ENCODE measurements at regions of chr5 and their contacts with region 1.

Region 1: DNA sequence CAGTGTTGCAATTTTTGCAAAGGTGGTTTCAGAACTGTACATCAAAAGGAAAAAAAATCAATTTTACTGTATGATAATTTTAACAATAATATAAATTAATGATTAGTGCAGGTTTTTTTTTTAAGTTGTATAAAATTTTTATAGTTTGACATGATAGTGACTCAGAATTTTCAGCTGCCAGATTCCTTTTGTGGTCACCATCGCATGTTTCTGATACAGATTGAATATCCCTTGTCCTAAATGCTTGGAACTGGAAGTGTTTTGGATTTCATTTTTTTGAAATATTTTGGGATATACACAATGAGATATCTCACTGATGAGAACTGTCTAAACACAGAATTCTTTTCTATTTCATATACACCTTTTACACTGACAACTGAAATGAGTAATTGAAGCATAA is 361.3 kb downstream of the RAB3C start:
- DNase-seq: no peak
- ATAC-seq: no peak
- H3K4me3 ChIP-seq: no peak overlapping the region
- H3K27ac ChIP-seq: no peak overlapping the region
- H3K4me1 ChIP-seq: no peaks in the 10 kb centered on the region
- H3K27me3 ChIP-seq: no peaks in the 10 kb centered on the region
- CTCF ChIP-seq: no peak
- EP300 ChIP-seq: no peak
- POLR2A ChIP-seq: no peak
- RAD21 ChIP-seq: no peak

Region 2: DNA sequence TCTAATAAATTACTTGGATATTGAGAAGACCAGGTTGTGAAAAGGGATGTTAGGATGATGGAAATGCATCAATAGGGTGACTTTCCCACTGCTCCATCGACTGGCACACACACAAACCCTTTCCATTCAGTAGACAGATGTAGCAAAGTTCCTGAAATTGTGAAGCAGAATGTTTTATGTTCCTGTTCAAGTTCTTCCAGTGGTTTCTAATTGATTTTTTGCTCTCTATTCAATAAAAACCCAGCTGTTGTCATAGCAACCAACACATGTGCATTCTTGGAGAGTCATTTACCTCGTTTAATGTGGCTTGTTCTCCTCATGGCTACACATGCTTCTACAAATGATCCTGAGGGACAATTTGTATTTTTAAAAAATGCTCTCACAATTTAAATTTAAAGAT is 116.8 kb before region 1 on chr5:
- CTCF ChIA-PET with region 1: no interaction called
- POLR2A ChIA-PET with region 1: no interaction called
- RAD21 ChIA-PET with region 1: no interaction called
- SMC1A ChIA-PET with region 1: no interaction called
- in situ Hi-C with region 1: no loop called
- intact Hi-C with region 1: no loop called
- DNase-seq: no peak
- ATAC-seq: no peak
- H3K4me3 ChIP-seq: no peak overlapping the region
- H3K27ac ChIP-seq: no peak overlapping the region
- H3K4me1 ChIP-seq: no peaks in the 10 kb centered on the region
- H3K27me3 ChIP-seq: no peaks in the 10 kb centered on the region
- CTCF ChIP-seq: no peak
- EP300 ChIP-seq: no peak
- POLR2A ChIP-seq: no peak
- RAD21 ChIP-seq: no peak

Region 3: DNA sequence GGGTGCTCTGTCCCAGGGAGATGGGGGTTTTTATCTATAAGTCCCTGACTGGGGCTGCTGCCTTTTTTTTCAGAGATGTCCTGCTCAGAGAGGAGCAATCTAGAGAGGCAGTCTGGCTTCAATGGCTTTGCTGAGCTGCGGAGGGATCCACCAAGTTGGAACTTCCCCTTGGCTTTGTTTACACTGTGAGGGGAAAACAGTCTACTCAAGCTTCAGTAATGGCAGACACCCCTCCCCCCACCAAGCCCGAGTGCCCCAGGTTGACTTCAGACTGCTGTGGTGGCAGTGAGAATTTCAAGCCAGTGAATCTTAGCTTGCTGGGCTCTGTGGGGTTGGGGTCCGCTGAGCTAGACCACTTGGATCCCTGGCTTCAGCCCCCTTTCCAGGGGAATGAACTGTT is 14.5 kb after region 1 on chr5:
- CTCF ChIA-PET with region 1: interaction called, 10 read pairs
- POLR2A ChIA-PET with region 1: interaction called, 4 read pairs
- RAD21 ChIA-PET with region 1: no interaction called
- SMC1A ChIA-PET with region 1: interaction called, 4 read pairs
- in situ Hi-C with region 1: no loop called
- intact Hi-C with region 1: no loop called
- DNase-seq: no peak
- ATAC-seq: no peak
- H3K4me3 ChIP-seq: no peak overlapping the region
- H3K27ac ChIP-seq: no peak overlapping the region
- H3K4me1 ChIP-seq: peaks cover 7% of the 10 kb centered on the region; the same call in 1 of the 2 replicates
- H3K27me3 ChIP-seq: no peaks in the 10 kb centered on the region
- CTCF ChIP-seq: no peak
- EP300 ChIP-seq: no peak
- POLR2A ChIP-seq: no peak
- RAD21 ChIP-seq: no peak

Measured in GM12878 (cell line).